ENCODE measurements at regions of chr10 and their contacts with region 1.

Region 1: DNA sequence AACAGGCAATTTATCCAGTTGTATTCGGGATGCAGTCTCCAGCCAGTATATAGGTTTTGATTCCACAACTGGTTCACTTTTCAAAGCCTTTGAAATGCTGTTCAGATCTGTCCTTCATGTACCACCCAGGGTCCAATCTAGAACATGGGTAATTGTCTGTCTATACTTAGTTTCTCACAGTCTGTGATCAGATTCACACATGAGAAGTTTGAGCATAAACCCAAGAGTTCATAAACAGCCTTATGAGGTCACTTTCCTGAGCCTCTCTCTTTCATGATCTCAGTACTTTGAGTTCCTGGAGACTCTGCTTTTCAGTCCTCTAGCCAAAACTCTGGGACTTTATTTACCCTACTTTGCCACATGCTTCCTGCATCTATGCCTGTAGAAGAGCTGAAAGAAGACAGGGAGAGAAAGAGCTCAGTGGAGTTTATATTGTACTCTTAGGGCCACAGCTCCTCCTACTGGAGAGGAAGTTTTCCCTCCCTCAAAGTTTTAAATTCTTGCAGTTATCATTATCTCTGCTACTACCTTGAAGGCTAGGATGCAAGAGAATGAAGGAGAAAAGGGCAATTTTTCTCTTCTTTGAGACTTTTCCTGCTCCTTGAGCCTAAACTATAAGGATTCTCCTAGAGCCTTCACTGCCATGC is 172.0 kb downstream of the ZEB1 start:
- DNase-seq: peak; percentile 71
- H3K4me3 ChIP-seq: no peak overlapping the region
- H3K27ac ChIP-seq: no peak overlapping the region
- H3K4me1 ChIP-seq: peaks cover 19% of the 10 kb centered on the region; the same call in 1 of the 2 replicates
- H3K27me3 ChIP-seq: no peaks in the 10 kb centered on the region

Region 2: GRCh38 chr10:30751678-30752331 is 739.2 kb before region 1 on chr10:
- in situ Hi-C with region 1: loop called (anchors 25 kb)
- DNase-seq: peak; percentile 89
- H3K4me3 ChIP-seq: no peak overlapping the region
- H3K27ac ChIP-seq: no peak overlapping the region
- H3K4me1 ChIP-seq: peaks cover 20% of the 10 kb centered on the region
- H3K27me3 ChIP-seq: no peaks in the 10 kb centered on the region